AG04450 (cell line): ENCODE measurements at regions of chr17 and their contacts with region 1.

Region 1: DNA sequence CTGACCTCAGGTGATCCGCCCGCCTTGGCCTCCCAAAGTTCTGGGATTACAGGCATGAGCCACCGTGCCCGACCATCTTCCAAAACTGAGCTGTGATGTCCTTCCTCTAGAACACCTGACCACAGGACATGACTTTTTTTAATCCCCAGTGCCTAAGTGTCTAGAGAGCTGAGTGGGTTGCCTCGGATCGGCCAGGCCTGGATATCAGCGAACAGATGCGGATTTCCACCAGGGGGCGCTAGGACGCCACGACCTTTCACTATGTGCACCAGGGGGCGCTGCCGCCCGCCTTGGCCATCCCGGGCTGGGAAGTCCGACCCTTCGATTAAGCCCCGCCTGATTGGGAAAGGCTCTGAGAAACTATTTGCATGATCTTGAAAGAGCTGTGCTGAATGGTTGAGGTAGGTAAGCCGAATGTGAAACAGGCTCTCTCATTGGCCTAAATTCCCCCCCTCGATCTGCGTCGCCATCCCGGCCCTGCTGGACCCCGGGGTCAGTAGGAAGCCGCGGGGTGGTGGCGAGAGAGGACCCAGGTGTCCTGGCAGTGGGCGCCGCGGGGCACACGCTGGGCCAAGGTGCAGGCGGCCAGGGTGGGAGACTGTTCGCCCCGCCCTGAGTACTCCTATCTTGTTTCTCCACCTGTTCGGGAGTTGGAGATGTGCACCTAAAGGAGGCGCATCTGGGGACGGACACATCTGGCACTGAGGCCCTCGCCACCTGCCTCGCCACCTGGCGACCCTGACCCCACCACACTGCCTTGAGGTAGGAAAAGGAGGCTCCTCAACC is at the start of gene ACBD4:
- DNase-seq: peak; percentile 95
- H3K4me3 ChIP-seq: peak within 1 kb of the TSS; percentile 76
- H3K27ac ChIP-seq: peak within 1 kb of the TSS; percentile 31
- H3K27me3 ChIP-seq: no peaks in the 10 kb centered on the region
- CTCF ChIP-seq: peak; percentile 100
- polyA plus RNA-seq, gene ACBD4: 4.0 and 4.7 TPM in 2 replicates

Region 2: GRCh38 chr17:44738214-44738906 is 397.0 kb before region 1 on chr17:
- CTCF ChIA-PET with region 1: no interaction called
- POLR2A ChIA-PET with region 1: no interaction called
- DNase-seq: no peak
- H3K4me3 ChIP-seq: no peak overlapping the region
- H3K27ac ChIP-seq: no peak overlapping the region
- H3K27me3 ChIP-seq: no peaks in the 10 kb centered on the region
- CTCF ChIP-seq: no peak

Region 3: DNA sequence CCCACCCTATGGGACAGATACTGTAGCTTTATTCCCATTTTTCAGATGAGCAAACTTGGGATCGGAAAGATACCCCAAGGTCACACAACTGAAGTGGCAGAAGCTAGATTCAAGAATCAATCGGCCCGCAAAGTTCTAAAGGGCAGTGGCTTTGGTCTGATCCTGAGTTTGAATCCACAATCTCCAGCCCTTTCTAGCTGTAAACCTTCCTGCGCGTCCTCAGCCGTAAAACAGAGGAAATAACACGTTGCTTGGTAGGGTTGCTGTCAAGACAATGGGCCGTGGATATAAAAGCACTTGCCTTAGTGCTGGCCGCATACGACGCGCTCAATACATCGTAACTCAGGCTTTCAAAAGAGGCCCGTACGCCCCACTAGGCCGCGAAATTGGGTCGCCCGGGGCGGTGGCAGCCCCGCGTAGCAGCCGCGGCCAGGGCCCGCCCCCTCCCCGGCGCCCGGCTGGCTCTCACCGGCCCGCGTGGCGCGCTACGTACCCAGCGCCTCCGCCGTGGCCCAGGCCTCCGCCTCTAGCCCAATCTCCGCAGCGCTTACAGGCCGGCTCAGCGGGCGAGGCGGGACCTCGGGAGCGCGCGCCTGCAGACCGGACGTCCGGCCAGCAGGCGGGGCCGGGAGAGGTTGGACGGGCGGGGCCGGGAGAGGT is 84.2 kb before region 1 on chr17 and contains the start of gene DCAKD:
- CTCF ChIA-PET with region 1: interaction called, 19 read pairs
- POLR2A ChIA-PET with region 1: no interaction called
- DNase-seq: peak; percentile 86
- H3K4me3 ChIP-seq: peak within 1 kb of the TSS; percentile 71
- H3K27ac ChIP-seq: peak within 1 kb of the TSS; percentile 94
- H3K27me3 ChIP-seq: no peaks in the 10 kb centered on the region
- CTCF ChIP-seq: no peak
- polyA plus RNA-seq, gene DCAKD: 21.8 and 29.1 TPM in 2 replicates

Region 4: DNA sequence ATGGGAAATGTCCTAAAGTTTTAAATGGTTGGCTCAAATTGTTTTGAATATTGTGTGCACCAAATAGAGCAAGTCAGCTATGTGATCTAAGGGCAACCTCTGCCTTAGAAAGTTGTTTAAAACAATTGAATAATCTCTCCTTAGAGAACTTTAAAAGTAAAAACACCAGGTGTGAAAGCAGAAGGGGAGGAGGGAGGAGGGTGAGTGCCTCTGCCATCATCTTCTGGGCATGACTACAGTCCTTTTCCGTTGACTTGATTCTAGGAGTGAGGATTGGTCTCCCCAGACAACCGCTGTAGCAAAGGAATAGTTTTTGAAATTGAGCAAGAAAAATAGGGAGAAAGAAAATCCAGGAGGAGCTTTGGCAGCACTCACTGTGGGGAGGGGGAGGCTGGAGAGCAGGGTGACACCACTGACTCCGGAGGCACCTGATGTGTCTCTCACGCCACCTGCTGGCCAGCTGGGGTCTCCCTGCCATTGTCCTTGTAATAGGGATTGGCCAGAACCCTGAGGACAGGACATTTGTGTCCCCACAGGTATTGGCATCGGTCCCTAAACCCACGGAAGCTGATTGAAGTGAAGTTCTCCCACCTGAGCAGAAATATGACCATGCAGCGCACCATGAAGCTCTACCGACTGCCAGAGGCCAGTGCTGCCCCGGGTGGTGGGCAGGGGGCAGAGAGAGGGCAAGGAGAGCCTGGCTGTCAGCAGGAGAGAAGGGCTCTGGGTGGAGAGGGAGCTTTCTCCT is 36.3 kb before region 1 on chr17:
- CTCF ChIA-PET with region 1: interaction called, 38 read pairs
- POLR2A ChIA-PET with region 1: no interaction called
- DNase-seq: peak; percentile 44
- H3K4me3 ChIP-seq: no peak overlapping the region
- H3K27ac ChIP-seq: peak overlapping the region; percentile 39
- H3K27me3 ChIP-seq: no peaks in the 10 kb centered on the region
- CTCF ChIP-seq: peak; percentile 83

Region 5: GRCh38 chr17:45155029-45155428 is 19.6 kb after region 1 on chr17:
- CTCF ChIA-PET with region 1: interaction called, 181 read pairs
- POLR2A ChIA-PET with region 1: interaction called, 110 read pairs
- DNase-seq: no peak
- H3K4me3 ChIP-seq: no peak overlapping the region
- H3K27ac ChIP-seq: no peak overlapping the region
- H3K27me3 ChIP-seq: no peaks in the 10 kb centered on the region
- CTCF ChIP-seq: no peak

Region 6: GRCh38 chr17:45197555-45198334 is 62.4 kb after region 1 on chr17:
- CTCF ChIA-PET with region 1: interaction called, 420 read pairs
- POLR2A ChIA-PET with region 1: interaction called, 11 read pairs
- DNase-seq: peak; percentile 72
- H3K4me3 ChIP-seq: no peak overlapping the region; the same call in 1 of the 2 replicates
- H3K27ac ChIP-seq: peak overlapping the region; percentile 2
- H3K27me3 ChIP-seq: no peaks in the 10 kb centered on the region
- CTCF ChIP-seq: peak; percentile 99

Region 7: GRCh38 chr17:45277216-45277849 is 141.9 kb after region 1 on chr17:
- CTCF ChIA-PET with region 1: interaction called, 12 read pairs
- POLR2A ChIA-PET with region 1: no interaction called
- DNase-seq: peak; percentile 81
- H3K4me3 ChIP-seq: no peak overlapping the region
- H3K27ac ChIP-seq: peak overlapping the region; percentile 31
- H3K27me3 ChIP-seq: no peaks in the 10 kb centered on the region
- CTCF ChIP-seq: peak; percentile 91